ENCODE measurements at regions of chr12 and their contacts with region 1.

Region 1: DNA sequence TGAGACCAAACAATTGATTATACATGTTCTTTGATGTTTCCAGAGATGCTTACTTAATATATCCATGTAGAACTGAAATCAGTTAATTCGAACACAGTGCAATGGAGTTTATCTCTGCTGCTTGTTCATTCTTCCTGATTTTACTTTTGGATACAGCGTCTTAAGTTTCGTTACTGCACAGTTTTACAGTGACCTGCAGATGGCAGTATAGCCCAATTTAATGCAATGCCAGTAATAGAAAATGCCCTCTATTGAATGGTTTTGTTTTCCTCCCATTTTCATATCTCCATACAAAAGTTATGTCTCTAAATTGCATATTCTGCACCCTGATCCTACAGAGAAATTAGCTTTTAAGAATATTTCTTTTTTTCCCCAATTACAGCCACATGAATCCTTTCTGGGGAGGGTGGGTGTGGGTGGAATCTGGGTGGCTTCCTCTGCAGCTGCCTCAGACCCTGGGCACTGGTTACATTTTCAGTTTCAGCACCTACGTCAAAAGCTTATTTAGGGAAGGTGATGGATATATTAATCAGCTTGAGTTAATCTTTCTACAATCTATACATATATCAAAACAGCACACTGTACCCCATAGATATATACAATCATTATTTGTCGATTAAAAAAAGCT is 101.1 kb upstream of the DCD start:
- DNase-seq: peak; percentile 58
- H3K4me3 Mint-ChIP-seq: no peak overlapping the region
- H3K27ac Mint-ChIP-seq: no peak overlapping the region
- H3K4me1 Mint-ChIP-seq: peaks cover 25% of the 10 kb centered on the region
- H3K27me3 Mint-ChIP-seq: no peaks in the 10 kb centered on the region

Region 2: DNA sequence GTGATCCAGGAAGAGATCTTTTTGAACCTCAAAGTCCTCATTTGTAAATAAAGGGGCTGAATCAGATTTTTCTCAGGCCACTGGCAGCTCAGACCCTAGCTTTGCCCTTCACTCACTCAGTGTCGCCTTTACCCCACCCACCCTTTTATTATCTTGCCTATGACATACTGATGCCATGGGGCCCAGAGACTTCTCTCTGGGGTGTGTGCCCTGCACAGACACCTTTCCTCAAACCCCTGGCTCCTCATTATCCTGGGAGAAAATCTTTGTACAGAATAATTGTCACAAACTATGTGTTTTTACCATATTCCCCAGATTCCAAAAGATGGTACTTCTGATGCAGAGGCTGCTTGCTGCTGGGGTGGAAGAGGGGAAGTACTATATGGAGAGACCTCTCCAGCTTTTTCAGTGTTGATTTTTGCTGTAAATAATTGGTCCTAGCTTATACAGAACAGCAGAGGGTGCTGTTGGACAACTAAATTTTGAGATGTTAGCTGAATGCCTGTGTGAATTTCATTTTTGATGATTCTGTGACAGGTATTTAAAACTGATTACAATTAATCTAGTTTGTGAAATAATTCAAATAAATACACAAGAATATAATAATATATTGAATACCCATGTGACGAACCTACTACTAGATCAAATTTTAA is 47.2 kb before region 1 on chr12:
- CTCF ChIA-PET with region 1: interaction called, 13 read pairs
- intact Hi-C with region 1: no loop called
- DNase-seq: no peak
- H3K4me3 Mint-ChIP-seq: no peak overlapping the region
- H3K27ac Mint-ChIP-seq: no peak overlapping the region
- H3K4me1 Mint-ChIP-seq: no peaks in the 10 kb centered on the region
- H3K27me3 Mint-ChIP-seq: no peaks in the 10 kb centered on the region

Region 3: DNA sequence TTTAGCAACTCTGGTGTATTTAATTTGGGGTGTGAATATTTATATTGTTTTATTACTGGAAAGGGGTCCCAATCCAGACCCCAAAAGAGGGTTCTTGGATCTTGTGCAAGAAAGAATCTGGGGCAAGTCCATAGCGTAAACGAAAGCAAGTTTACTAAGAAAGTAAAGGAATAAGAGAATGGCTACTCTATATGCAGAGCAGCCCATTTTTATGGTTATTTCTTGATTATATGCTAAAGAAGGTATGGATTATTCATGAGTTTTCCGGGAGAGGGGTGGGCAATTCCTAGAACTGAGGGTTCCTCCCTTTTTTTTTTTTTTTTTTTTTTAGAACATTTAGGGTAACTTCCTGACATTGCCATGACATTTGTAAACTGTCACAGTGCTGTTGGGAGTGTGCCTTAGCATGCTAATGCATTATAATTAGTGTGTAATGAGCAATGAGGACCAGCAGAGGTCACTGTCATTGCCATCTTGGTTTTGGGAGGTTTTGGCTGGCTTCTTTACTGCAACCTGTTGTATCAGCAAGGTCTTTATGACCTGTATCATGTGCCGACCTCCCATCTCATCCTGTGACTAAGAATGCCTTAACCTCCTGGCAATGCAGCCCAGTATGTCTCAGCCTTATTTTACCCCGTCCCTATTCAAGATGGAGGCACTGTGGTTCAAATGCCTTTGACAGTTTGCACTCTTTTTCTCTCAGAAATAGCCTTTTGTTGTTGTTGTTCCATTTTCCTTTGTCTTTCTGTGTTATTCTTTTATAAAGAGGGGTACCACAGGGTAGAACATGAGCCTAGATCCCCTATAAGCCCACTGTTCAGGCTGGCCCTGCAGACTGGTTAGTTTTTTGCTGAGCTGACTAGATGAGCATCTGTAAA is 25.7 kb before region 1 on chr12:
- CTCF ChIA-PET with region 1: interaction called, 14 read pairs
- intact Hi-C with region 1: no loop called
- DNase-seq: peak; percentile 46
- H3K4me3 Mint-ChIP-seq: no peak overlapping the region
- H3K27ac Mint-ChIP-seq: no peak overlapping the region
- H3K4me1 Mint-ChIP-seq: peaks cover 19% of the 10 kb centered on the region
- H3K27me3 Mint-ChIP-seq: no peaks in the 10 kb centered on the region

Region 4: DNA sequence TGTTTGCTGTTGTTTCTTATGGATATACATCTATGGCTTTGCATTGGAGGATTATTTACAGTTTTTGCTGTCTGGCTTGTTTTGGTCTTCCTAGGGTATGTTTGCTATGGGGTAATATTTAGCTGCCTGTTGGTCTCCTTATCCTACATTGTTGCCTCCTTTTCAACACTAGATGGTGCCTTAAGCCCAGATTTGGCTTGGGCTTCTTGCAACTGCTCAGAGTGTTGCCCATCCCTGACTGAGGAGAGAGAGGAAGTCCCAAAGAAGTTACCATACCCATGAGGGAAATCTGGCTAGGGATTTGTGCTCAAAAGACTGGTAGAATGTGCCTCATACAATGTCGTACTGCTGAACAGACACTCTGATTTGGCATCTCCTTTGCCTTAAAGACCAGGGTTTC is 10.4 kb after region 1 on chr12:
- CTCF ChIA-PET with region 1: interaction called, 30 read pairs
- intact Hi-C with region 1: no loop called
- DNase-seq: peak; percentile 38
- H3K4me3 Mint-ChIP-seq: no peak overlapping the region
- H3K27ac Mint-ChIP-seq: no peak overlapping the region
- H3K4me1 Mint-ChIP-seq: peaks cover 19% of the 10 kb centered on the region
- H3K27me3 Mint-ChIP-seq: no peaks in the 10 kb centered on the region

Region 5: DNA sequence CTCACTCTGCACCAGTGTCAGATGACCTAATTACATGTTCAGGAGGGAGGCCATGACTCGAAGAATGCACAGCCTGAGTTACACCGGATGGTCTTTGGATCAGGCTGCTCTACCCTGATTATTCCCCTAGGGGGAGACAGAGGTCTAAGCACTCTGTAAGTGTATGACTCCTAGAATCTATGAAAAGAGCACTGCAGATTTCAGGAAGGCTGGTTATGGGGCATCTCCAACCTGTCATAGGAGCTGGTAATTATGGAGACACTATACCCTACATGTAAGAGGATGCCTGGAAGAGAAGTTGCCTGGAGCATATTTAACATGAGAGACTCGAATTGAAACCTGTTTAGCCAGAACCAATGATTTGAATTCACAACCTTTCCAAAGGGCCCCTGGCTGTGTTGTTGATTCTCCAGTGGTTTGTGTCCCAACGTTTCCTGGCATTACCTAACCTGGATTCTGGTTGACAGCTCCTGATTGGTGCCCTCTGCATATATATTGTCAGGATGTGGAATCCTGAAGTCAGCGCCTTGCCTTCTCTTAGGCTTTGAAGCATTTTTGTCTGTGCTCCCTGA is 104.8 kb after region 1 on chr12 and contains the start of gene MUCL1:
- CTCF ChIA-PET with region 1: interaction called, 39 read pairs
- intact Hi-C with region 1: loop called (anchors 1 kb)
- DNase-seq: peak; percentile 89
- H3K4me3 Mint-ChIP-seq: no peak within 1 kb of the TSS
- H3K27ac Mint-ChIP-seq: no peak within 1 kb of the TSS
- H3K4me1 Mint-ChIP-seq: peaks cover 16% of the 10 kb centered on the region
- H3K27me3 Mint-ChIP-seq: no peaks in the 10 kb centered on the region
- total RNA-seq, gene MUCL1: not detected

Region 6: DNA sequence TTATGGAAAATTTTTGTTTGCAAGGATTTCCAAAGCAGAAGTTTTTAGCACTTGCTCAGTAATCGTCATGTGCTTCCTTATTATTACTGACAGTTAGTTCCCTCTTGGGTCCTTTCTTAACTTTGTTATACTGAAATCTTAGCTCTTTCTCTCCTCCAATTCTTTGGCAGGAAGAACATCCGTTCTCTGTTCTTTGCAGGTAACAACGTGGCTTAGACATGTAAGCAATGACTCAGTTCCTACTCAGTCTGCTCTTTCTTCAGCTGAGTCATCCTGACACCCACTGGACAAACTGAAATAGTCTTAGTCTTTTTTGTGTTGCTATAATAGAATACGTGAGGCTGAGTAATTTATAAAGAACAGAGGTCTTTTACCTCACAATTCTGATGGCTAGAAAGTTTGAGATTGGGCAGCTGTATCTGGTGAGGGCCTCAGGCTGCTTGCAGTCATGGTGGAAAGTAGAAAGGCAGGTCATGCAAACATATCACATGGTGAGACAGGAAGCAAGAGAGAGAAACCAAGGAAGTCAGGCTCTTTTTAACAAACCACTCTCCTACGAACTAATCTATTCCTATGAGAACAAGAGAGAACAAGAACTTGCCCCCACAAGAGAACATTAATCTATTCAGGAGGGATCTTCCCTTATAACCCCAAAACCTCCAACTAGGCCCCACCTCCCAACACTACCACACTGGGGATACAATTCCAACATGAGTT is 186.1 kb after region 1 on chr12:
- CTCF ChIA-PET with region 1: interaction called, 12 read pairs
- intact Hi-C with region 1: no loop called
- DNase-seq: peak; percentile 69
- H3K4me3 Mint-ChIP-seq: peak overlapping the region; percentile 51
- H3K27ac Mint-ChIP-seq: peak overlapping the region; percentile 93
- H3K4me1 Mint-ChIP-seq: peaks cover 64% of the 10 kb centered on the region
- H3K27me3 Mint-ChIP-seq: no peaks in the 10 kb centered on the region

Region 7: GRCh38 chr12:55142669-55143565 is 393.6 kb after region 1 on chr12:
- CTCF ChIA-PET with region 1: interaction called, 4 read pairs
- intact Hi-C with region 1: loop called (anchors 1 kb)
- DNase-seq: peak; percentile 70
- H3K4me3 Mint-ChIP-seq: no peak overlapping the region
- H3K27ac Mint-ChIP-seq: no peak overlapping the region
- H3K4me1 Mint-ChIP-seq: no peaks in the 10 kb centered on the region
- H3K27me3 Mint-ChIP-seq: no peaks in the 10 kb centered on the region